T-cell (primary cell): ENCODE measurements at regions of chr11 and their contacts with region 1.

Region 1: DNA sequence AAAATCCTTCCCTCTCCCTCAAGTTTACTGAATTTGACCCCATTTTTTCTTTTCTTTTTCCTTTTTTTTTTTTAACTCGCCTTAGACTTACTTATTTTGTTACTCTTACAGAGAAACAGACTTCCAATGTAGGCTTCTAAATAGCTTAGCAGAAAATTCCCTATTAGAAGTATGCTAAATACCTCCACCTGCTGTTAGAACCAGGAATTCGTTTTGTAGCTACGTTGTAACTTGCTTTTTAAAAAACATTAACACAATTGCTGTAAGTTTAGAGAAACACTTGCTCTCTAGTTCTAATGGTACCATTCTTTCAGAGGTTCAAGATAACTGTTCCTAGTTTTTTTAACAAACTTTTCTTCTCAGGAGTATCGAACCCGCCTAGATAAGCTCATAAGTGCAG is 324.2 kb downstream of the DCDC1 start:
- DNase-seq: no peak
- ATAC-seq: no peak
- H3K4me3 ChIP-seq: no peak overlapping the region
- H3K4me3 Mint-ChIP-seq: no peak overlapping the region
- H3K27ac ChIP-seq: no peak overlapping the region
- H3K27ac Mint-ChIP-seq: no peak overlapping the region
- H3K4me1 ChIP-seq: no peaks in the 10 kb centered on the region
- H3K4me1 Mint-ChIP-seq: no peaks in the 10 kb centered on the region
- H3K27me3 ChIP-seq: peaks cover 0 to 2% of the 10 kb centered on the region in 2 experiments
- H3K27me3 Mint-ChIP-seq: no peaks in the 10 kb centered on the region

Region 2: DNA sequence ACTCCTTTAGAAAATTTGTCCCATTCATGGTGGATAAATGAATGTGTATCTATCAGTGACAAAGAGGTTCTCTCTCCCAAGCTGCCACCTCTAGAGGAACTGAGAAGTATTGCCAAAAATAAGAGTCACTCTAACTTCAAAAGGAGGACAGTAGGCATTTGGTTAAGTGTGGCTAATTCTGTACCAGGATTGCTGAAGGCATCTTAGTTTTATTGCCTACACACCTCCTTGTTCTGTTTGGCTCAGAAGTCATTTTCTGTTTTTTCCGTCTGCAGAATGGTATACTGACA is 270.2 kb before region 1 on chr11:
- CTCF ChIA-PET with region 1: no interaction called
- POLR2A ChIA-PET with region 1: no interaction called
- DNase-seq: no peak
- ATAC-seq: no peak
- H3K4me3 ChIP-seq: no peak overlapping the region
- H3K4me3 Mint-ChIP-seq: no peak overlapping the region
- H3K27ac ChIP-seq: no peak overlapping the region
- H3K27ac Mint-ChIP-seq: no peak overlapping the region
- H3K4me1 ChIP-seq: no peaks in the 10 kb centered on the region
- H3K4me1 Mint-ChIP-seq: no peaks in the 10 kb centered on the region
- H3K27me3 ChIP-seq: no peaks in the 10 kb centered on the region
- H3K27me3 Mint-ChIP-seq: peaks cover 0 to 3% of the 10 kb centered on the region in 2 donors

Region 3: GRCh38 chr11:31069447-31070205 is 24.3 kb after region 1 on chr11:
- CTCF ChIA-PET with region 1: no interaction called
- POLR2A ChIA-PET with region 1: interaction called in 1 of 2 experiments, 11 read pairs
- DNase-seq: no peak
- ATAC-seq: no peak
- H3K4me3 ChIP-seq: no peak overlapping the region
- H3K4me3 Mint-ChIP-seq: no peak overlapping the region
- H3K27ac ChIP-seq: no peak overlapping the region
- H3K27ac Mint-ChIP-seq: no peak overlapping the region
- H3K4me1 ChIP-seq: no peaks in the 10 kb centered on the region
- H3K4me1 Mint-ChIP-seq: no peaks in the 10 kb centered on the region
- H3K27me3 ChIP-seq: no peaks in the 10 kb centered on the region
- H3K27me3 Mint-ChIP-seq: no peaks in the 10 kb centered on the region